IMR-90 (cell line): ENCODE measurements at regions of chr1 and their contacts with region 1.

Region 1: DNA sequence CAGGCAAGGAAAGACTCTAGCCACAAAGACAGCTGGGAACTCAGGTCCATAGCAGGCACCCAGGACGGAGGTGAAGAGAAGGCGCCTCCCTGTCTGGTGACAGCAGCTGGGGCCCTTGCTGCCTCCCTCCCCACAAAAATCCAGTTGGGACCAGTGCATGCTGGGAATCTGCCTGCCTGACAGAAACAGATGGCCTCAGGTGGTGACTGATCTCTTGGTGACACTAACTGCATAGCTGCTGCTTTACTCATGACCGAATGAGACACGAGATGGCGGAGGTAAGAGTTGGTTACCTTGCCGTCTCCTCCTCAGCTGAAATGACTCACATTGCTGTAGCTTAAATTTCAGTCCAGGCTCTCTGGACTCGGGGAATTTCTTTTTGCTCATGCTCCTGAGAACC is 130.3 kb downstream of the FGGY start:
- DNase-seq: peak; percentile 83
- ATAC-seq: peak; percentile 70
- H3K4me3 ChIP-seq: no peak overlapping the region
- H3K27ac ChIP-seq: no peak overlapping the region
- H3K4me1 ChIP-seq: peaks cover 9% of the 10 kb centered on the region
- H3K27me3 ChIP-seq: no peaks in the 10 kb centered on the region
- CTCF ChIP-seq: no peak
- POLR2A ChIP-seq: no peak
- RAD21 ChIP-seq: no peak

Region 2: GRCh38 chr1:59375321-59376220 is 51.6 kb before region 1 on chr1:
- CTCF ChIA-PET with region 1: no interaction called
- POLR2A ChIA-PET with region 1: no interaction called
- dilution Hi-C with region 1: no loop called
- in situ Hi-C with region 1: loop called (anchors 5 kb)
- intact Hi-C with region 1: no loop called
- DNase-seq: peak; percentile 98
- ATAC-seq: peak; percentile 96
- H3K4me3 ChIP-seq: no peak overlapping the region
- H3K27ac ChIP-seq: peak overlapping the region; percentile 88
- H3K4me1 ChIP-seq: peaks cover 8% of the 10 kb centered on the region
- H3K27me3 ChIP-seq: no peaks in the 10 kb centered on the region
- CTCF ChIP-seq: no peak
- POLR2A ChIP-seq: no peak
- RAD21 ChIP-seq: no peak

Region 3: DNA sequence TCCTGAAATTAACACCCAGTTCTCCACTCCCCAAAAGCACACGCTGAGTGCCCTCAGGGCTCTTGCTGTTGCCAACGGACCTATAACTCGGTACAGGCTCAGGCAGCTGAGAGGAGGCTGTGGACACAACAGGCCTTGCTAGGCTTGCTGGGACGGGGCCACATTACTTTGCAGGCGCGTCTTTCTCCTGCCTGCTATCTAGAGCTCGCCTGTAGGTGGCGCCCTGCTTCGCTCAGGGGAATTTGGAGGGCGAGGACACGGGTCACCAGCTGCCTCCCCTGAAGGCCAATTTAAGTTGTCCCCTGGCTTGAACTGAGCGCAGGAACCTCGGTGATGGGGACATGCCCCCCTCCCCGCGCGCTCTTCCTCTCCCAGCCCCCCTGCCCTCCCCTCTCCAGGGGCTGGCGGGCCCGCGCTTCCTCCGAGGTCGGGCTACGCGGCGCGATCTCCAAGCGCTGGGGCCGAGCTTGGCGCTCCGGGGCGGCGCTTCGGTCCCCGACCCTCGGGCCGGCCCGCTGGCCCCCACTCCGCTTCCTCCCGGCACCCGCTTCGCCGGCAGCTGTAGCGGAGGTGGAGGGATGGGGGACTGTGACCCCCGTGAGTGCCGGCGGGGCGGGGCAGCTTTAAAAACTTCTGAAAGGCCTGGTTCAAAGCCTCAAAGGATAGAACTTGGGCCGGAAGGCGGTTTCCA is 1622.8 kb after region 1 on chr1:
- CTCF ChIA-PET with region 1: no interaction called
- POLR2A ChIA-PET with region 1: no interaction called
- dilution Hi-C with region 1: no loop called
- in situ Hi-C with region 1: no loop called
- intact Hi-C with region 1: no loop called
- DNase-seq: peak; percentile 68
- ATAC-seq: peak; percentile 95
- H3K4me3 ChIP-seq: peak overlapping the region; percentile 61
- H3K27ac ChIP-seq: no peak overlapping the region
- H3K4me1 ChIP-seq: no peaks in the 10 kb centered on the region
- H3K27me3 ChIP-seq: peaks cover 42% of the 10 kb centered on the region
- CTCF ChIP-seq: peak; percentile 92
- POLR2A ChIP-seq: no peak
- RAD21 ChIP-seq: peak; percentile 81